Aorta (tissue), 5 donors: ENCODE measurements at regions of chr7 and their contacts with region 1.

Region 1: GRCh38 chr7:148962823-148963582 is 65.3 kb downstream of the PDIA4 start:
- DNase-seq: peak; percentile 79 to 83
- ATAC-seq: peak; percentile 82
- H3K4me3 ChIP-seq: peak overlapping the region; percentile 53 to 90
- H3K27ac ChIP-seq: peak overlapping the region in 1 of 2 donors; percentile 46
- H3K4me1 ChIP-seq: no peaks in the 10 kb centered on the region
- H3K27me3 ChIP-seq: no peaks in the 10 kb centered on the region

Region 2: GRCh38 chr7:148503875-148504487 is 459.0 kb before region 1 on chr7:
- intact Hi-C with region 1: loop called (anchors 2 to 5 kb)
- DNase-seq: no peak
- ATAC-seq: no peak
- H3K4me3 ChIP-seq: no peak overlapping the region
- H3K27ac ChIP-seq: no peak overlapping the region
- H3K4me1 ChIP-seq: no peaks in the 10 kb centered on the region
- H3K27me3 ChIP-seq: no peaks in the 10 kb centered on the region

Region 3: GRCh38 chr7:148575640-148576411 is 387.2 kb before region 1 on chr7:
- intact Hi-C with region 1: loop called (anchors 2 to 5 kb)
- DNase-seq: peak; percentile 66 to 85
- ATAC-seq: no peak
- H3K4me3 ChIP-seq: no peak overlapping the region
- H3K27ac ChIP-seq: no peak overlapping the region
- H3K4me1 ChIP-seq: no peaks in the 10 kb centered on the region
- H3K27me3 ChIP-seq: no peaks in the 10 kb centered on the region

Region 4: DNA sequence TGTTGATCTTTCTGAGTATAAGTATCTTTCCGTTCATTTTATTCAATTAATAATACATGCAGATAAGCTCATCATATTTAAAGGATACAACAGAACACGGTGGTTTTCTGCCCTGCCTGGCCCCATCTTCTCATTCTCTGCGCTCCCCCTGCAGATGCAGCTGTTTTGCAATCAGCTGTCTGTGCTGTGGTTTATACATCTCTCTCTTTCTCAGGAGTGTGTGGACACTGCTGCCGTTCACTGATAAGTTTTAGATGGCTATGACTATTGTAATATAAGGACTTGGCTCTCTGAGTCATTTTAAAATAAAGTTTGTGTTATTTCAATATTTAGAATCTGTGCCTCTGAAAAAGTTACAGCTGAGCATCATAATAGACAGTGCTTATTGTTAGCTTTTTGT is 209.8 kb before region 1 on chr7:
- intact Hi-C with region 1: no loop called
- DNase-seq: no peak
- ATAC-seq: no peak
- H3K4me3 ChIP-seq: no peak overlapping the region
- H3K27ac ChIP-seq: no peak overlapping the region
- H3K4me1 ChIP-seq: no peaks in the 10 kb centered on the region
- H3K27me3 ChIP-seq: no peaks in the 10 kb centered on the region

Region 5: GRCh38 chr7:148793590-148793989 is 169.4 kb before region 1 on chr7:
- intact Hi-C with region 1: loop called in 1 of 2 experiments (anchors 10 kb)
- DNase-seq: no peak
- ATAC-seq: no peak
- H3K4me3 ChIP-seq: no peak overlapping the region
- H3K27ac ChIP-seq: no peak overlapping the region
- H3K4me1 ChIP-seq: no peaks in the 10 kb centered on the region
- H3K27me3 ChIP-seq: no peaks in the 10 kb centered on the region

Region 6: DNA sequence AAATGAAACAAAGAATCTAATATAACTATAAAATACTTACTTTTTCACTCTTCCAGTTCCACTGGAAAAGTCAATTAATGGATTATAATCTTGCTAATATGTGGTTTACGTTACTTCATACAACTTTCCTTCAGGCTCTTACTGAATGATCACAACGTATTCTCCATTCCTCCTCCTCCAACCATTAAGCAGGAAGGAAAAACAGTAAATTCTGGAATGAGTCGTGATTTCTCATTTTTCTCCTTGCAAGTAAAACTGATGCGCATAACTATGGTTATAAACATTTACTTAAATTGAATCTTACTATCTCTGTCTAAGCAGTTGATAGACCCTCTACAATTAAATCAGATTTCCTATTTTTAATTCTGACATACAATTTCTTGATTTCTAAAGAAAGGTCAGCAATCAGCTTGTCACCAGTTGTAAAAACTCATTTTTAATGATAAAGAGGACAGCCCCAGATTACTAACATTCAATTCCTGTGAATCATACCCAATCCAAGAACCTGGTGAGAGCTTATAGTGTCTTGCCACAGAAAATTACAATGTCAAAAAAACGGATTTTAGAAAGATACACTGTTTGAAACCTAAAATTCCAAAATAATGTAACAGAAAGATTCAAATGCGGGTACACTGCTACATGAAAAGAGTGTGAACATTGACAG is 143.2 kb before region 1 on chr7:
- intact Hi-C with region 1: no loop called
- DNase-seq: no peak
- ATAC-seq: no peak
- H3K4me3 ChIP-seq: no peak overlapping the region
- H3K27ac ChIP-seq: no peak overlapping the region
- H3K4me1 ChIP-seq: no peaks in the 10 kb centered on the region
- H3K27me3 ChIP-seq: no peaks in the 10 kb centered on the region

Region 7: GRCh38 chr7:148856891-148857290 is 106.1 kb before region 1 on chr7:
- intact Hi-C with region 1: loop called (anchors 1 to 10 kb)
- DNase-seq: no peak
- ATAC-seq: no peak
- H3K4me3 ChIP-seq: no peak overlapping the region
- H3K27ac ChIP-seq: no peak overlapping the region
- H3K4me1 ChIP-seq: no peaks in the 10 kb centered on the region
- H3K27me3 ChIP-seq: no peaks in the 10 kb centered on the region

Region 8: DNA sequence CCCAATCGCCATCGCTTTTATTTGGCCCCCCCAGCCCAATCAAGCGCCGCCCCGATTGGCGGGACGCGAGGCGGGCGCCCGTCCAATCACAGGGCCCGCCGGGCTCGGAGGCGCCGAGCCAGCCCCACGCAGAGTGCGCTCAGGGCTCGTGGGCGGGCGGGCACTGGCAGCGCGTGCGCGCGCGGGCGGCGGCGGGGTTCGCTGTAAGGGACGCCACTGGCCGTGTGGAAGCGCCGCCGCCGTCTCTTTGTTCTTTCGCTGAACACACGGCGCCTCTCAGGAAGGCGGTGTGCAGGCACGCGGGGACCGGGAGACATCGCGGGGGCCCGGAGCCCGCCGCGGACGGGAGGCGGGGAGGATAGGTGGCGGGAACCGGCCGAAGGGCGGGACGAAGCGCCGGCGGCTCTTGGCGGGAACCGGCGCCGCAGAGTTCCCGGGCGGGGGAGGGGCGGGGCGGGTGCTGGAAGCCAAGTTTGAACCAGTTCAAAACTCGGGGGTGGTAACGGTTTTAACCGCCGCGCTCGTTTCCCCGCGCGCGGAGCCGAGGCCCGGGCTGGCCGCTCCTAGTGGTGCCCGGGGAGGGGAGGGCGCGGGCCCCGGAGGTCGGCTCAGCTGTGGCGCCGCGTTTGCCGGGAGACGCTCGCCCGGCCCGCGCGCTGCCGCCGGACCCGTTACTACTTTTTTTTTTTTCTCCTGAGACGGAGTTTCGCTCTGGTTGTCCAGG is 78.5 kb before region 1 on chr7:
- intact Hi-C with region 1: loop called in 1 of 2 experiments (anchors 5 kb)
- DNase-seq: peak; percentile 95 to 97
- ATAC-seq: peak; percentile 99
- H3K4me3 ChIP-seq: peak overlapping the region; percentile 68 to 98
- H3K27ac ChIP-seq: peak overlapping the region in 1 of 2 donors; percentile 81
- H3K4me1 ChIP-seq: no peaks in the 10 kb centered on the region
- H3K27me3 ChIP-seq: no peaks in the 10 kb centered on the region

Region 9: DNA sequence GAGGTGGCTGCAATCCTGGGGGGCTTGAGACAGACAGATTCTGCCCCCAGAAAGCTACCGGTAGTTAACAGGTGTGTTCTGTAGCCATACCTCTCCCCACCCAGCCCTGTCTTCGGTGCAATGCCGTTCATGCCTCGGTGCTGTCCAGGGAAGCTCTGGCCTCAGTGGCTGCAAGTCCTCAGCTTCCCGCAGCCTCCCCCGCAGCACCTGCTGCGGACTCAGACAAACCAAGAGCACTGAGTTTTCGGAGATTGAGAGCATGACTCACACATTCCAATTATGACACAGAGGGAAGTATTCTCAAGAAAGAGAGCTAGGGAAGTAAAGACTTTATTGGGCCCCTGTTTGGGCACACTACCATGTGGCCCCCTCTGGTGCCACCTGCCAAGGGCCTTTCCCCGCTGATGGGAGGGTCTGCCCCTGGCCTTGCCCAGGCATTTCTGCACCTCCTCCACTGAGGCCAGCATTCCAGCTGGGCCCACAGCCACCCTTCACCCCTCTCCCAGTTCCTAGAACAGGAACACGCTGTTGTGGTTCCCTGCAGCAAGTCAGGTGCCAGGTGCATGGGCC is 48.7 kb before region 1 on chr7:
- intact Hi-C with region 1: no loop called
- DNase-seq: no peak
- ATAC-seq: no peak
- H3K4me3 ChIP-seq: no peak overlapping the region
- H3K27ac ChIP-seq: no peak overlapping the region
- H3K4me1 ChIP-seq: no peaks in the 10 kb centered on the region
- H3K27me3 ChIP-seq: no peaks in the 10 kb centered on the region

Region 10: DNA sequence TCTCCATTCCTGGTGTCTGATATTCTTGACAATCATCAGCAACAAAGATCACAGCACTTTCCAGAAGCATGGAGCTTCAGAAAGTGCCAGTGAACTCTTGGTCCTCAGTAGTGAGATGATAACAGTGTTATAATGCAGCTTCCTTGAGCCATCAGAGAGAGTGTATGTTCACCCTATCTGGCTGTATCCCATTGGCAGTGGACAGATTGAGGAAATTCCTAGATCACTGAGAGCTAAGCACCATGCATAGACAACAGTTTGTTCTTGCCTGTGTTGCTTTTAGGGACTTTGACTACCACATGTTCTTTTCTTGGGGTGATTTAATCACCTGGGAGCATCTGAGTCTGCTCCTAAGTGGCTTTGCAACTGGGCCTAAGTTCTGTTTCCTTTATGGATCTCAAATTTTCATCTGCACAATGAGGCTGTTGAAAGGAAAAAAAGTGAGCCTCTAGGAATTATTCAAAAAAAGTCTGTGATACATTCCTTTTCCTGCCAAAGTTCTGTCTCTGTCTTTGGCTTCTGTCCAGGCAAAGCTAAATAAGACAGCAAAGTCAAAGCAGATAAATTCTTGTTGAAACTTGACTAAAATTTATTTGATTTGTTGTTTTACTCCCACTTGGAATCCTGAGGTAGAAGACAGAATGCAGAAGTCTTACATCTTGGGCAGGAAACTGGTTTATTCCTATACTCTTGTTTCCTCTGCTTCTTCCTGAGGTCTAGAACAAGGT is 217.9 kb after region 1 on chr7:
- intact Hi-C with region 1: no loop called
- DNase-seq: no peak
- ATAC-seq: no peak
- H3K4me3 ChIP-seq: no peak overlapping the region
- H3K27ac ChIP-seq: no peak overlapping the region
- H3K4me1 ChIP-seq: no peaks in the 10 kb centered on the region
- H3K27me3 ChIP-seq: no peaks in the 10 kb centered on the region